Activated CD4-positive, alpha-beta memory T cell treated with anti-CD3 and anti-CD28 coated beads for 36 hours (primary cell): ENCODE measurements at regions of chr19 and their contacts with region 1.

Region 1: DNA sequence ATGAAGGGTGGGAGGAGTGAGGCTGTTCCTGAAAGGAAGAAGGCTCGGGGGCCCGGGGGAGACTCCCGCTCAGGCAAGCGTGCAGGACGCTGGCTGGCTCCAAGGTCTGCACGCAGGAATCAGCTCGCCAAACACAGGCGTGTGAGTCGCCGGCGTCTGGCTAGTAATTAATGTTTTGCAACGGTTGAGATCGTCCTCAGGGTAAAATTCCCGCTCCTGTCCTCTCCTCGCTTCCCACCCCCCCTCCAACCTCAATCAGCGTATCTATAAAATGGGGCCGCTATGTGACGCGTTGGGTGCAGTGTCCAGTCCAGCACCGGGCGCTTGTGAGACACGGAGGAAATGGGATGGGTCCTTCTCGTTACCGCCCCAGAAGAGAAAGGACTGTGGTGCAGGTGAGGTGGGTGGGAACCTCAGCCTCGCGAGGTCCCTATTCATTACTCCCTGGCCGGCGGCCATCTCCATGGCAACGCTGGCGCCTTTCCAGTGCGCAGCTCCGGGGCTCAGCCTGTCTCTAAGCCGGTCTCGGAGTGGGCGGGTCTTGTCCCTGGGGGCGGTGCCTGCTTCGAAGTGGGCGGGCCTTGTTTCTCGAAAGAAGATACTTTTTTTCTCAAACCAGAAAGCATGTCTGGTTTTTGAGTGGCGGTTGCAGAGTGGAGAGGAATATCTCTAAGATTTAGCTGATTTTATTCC is 6.5 kb upstream of the ZNF579 start:
- DNase-seq: peak; percentile 96
- H3K4me3 Mint-ChIP-seq: peak overlapping the region; percentile 75
- H3K27ac Mint-ChIP-seq: no peak overlapping the region
- H3K4me1 Mint-ChIP-seq: peaks cover 19% of the 10 kb centered on the region
- H3K27me3 Mint-ChIP-seq: no peaks in the 10 kb centered on the region

Region 2: GRCh38 chr19:55345818-55346724 is 241.1 kb before region 1 on chr19:
- CTCF ChIA-PET with region 1: no interaction called
- POLR2A ChIA-PET with region 1: no interaction called
- intact Hi-C with region 1: no loop called
- DNase-seq: no peak
- H3K4me3 Mint-ChIP-seq: no peak overlapping the region
- H3K27ac Mint-ChIP-seq: no peak overlapping the region
- H3K4me1 Mint-ChIP-seq: peaks cover 6% of the 10 kb centered on the region
- H3K27me3 Mint-ChIP-seq: peaks cover 2% of the 10 kb centered on the region

Region 3: DNA sequence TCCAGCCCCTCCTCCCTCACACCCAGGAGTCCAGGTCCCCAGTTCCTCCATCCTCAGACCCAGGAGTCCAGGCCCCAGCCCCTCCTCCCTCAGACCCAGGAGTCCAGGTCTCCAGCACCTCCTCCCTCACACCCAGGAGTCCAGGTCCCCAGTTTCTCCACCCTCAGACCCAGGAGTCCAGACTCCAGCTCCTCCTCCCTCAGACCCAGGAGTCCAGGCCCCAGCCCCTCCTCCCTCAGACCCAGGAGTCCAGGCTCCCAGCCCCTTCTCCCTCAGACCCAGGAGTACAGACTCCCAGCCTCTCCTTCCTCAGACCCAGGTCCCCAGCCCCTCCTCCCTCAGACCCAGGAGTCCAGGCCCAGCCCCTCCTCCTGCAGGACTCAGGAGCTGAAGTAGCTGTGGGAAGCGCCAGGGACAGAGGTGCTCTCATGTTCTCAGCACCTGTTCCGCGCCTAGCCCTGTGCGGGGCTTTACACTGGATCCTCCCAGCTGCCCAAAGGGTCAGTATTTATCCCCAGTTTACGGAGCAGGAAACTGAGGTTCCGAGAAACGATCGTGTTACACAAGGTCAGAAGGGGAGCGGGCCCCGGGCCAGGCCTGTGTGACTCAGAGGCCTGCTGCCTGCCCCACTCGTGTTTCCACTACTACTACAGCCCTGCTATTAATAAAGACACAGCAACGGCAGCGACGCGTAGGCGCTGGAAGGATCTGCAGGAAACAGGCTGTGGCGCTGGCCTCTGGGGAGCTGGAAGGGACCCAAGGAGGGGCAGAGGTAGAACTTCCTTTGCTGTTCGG is 40.1 kb before region 1 on chr19:
- CTCF ChIA-PET with region 1: no interaction called
- POLR2A ChIA-PET with region 1: no interaction called
- intact Hi-C with region 1: no loop called
- DNase-seq: no peak
- H3K4me3 Mint-ChIP-seq: no peak overlapping the region
- H3K27ac Mint-ChIP-seq: no peak overlapping the region
- H3K4me1 Mint-ChIP-seq: no peaks in the 10 kb centered on the region
- H3K27me3 Mint-ChIP-seq: peaks cover 20% of the 10 kb centered on the region

Region 4: DNA sequence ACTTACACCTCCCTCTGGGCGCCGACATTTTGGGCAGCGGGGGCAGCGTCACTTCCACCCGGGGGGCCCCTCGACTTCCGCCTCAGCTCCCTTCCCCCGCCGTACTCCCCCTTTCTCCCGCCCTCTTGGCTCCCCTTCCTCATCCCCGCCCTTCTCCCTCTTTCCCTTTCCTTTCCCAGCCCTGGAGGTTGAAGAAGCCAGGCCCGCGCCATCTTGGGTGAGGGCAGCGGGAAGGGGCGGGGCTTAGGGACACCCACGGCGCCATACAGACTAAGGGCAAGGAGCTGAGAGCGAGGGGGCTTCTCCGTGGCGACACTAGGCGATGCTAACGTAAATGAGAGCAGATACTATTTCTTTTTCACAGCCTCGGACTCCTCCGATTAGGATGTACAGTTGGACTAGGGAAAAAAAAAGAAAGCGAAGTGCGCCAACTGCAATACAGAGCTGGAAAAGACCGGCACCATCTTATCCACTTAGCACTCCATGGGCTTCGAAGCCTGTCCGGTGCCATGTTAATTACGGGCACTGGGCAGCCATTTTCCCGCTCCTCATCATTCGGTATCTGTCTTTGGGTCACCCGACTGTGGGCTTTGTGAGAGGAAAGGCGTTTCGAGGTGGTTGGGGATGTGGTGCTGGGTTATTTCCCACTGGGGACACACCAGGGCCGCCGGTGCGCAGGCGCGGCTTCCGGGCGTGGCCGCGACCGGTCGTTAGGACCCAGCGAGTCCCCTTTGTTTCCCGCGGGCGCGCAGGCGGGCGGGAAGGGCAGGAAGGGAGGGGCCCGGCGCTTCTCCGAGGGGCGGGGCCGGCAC is 12.6 kb after region 1 on chr19 and contains the start of gene FIZ1:
- CTCF ChIA-PET with region 1: interaction called, 7 read pairs
- POLR2A ChIA-PET with region 1: interaction called, 7 read pairs
- intact Hi-C with region 1: loop called (anchors 1 kb)
- DNase-seq: peak; percentile 98
- H3K4me3 Mint-ChIP-seq: peak within 1 kb of the TSS; percentile 91
- H3K27ac Mint-ChIP-seq: peak within 1 kb of the TSS; percentile 95
- H3K4me1 Mint-ChIP-seq: peaks cover 25% of the 10 kb centered on the region
- H3K27me3 Mint-ChIP-seq: no peaks in the 10 kb centered on the region
- total RNA-seq, gene FIZ1: 13.8 to 13.9 TPM

Region 5: DNA sequence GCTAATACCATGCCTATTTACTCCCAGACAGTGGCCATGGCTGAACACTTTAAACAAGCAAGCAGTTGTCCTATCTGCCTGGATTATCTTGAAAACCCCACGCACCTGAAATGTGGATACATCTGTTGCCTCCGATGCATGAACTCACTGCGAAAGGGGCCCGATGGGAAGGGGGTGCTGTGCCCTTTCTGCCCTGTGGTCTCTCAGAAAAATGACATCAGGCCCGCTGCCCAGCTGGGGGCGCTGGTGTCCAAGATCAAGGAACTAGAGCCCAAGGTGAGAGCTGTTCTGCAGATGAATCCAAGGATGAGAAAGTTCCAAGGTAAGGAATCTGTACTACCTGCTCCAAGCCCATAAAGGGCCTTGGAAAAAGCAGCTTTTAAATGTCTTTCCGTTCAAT is 190.4 kb after region 1 on chr19:
- CTCF ChIA-PET with region 1: no interaction called
- POLR2A ChIA-PET with region 1: no interaction called
- intact Hi-C with region 1: no loop called
- DNase-seq: peak; percentile 17
- H3K4me3 Mint-ChIP-seq: no peak overlapping the region
- H3K27ac Mint-ChIP-seq: no peak overlapping the region
- H3K4me1 Mint-ChIP-seq: no peaks in the 10 kb centered on the region
- H3K27me3 Mint-ChIP-seq: peaks cover 29% of the 10 kb centered on the region